Heart left ventricle (tissue), 16 donors: ENCODE measurements at regions of chr12 and their contacts with region 1.

Region 1: GRCh38 chr12:93183940-93184671 is 193.6 kb upstream of the NUDT4 start:
- DNase-seq: peak in 4 of 5 donors; percentile 50 to 71 (median 62)
- ATAC-seq: peak; percentile 82 to 91 (median 86)
- H3K4me3 ChIP-seq: no peak overlapping the region
- H3K27ac ChIP-seq: peak overlapping the region; percentile 78 to 95 (median 86)
- H3K4me1 ChIP-seq: peaks cover 3 to 39% (median 18%) of the 10 kb centered on the region in 12 donors
- H3K27me3 ChIP-seq: no peaks in the 10 kb centered on the region
- CTCF ChIP-seq: no peak
- POLR2A ChIP-seq: no peak

Region 2: DNA sequence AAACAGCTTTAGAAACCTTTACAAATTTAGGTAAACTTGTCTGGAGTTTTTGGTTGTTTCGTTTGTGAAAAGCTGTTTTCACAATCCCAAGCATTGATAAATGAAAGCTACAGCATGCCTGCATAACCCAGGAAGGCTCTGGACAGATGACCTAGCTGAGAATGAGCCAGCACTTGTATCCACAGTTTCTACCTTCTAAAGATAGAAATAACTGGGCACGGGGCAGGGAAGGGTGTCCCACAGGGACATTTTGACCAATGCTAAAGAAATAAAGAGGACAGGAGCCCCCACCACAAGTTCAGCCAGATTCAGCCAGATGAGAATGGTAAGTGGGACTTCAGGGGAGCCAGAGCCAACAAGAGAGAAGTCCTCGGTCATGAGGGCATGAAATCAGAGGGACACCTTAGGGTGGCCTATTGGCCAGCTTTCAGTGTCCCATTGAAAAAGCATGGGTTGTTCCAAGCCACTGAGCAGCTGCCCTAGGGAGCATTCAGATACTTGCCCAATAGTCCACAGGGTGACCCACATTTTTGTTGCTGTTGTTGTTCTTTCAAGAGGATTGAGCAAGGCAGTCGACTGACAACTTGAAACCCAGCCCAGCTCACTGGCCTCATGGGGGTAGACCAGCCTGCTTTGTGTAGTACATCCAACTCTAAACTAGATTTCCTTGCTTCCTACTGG is 53.3 kb after region 1 on chr12:
- intact Hi-C with region 1: loop called in 1 of 10 experiments (anchors 5 kb)
- DNase-seq: peak in 1 of 5 donors; percentile 42
- ATAC-seq: peak; percentile 44 to 75 (median 70)
- H3K4me3 ChIP-seq: no peak overlapping the region
- H3K27ac ChIP-seq: peak overlapping the region in 4 of 12 donors; percentile 31 to 55 (median 44)
- H3K4me1 ChIP-seq: peaks cover 0 to 12% (median 2%) of the 10 kb centered on the region in 12 donors
- H3K27me3 ChIP-seq: no peaks in the 10 kb centered on the region
- CTCF ChIP-seq: no peak
- POLR2A ChIP-seq: no peak

Region 3: DNA sequence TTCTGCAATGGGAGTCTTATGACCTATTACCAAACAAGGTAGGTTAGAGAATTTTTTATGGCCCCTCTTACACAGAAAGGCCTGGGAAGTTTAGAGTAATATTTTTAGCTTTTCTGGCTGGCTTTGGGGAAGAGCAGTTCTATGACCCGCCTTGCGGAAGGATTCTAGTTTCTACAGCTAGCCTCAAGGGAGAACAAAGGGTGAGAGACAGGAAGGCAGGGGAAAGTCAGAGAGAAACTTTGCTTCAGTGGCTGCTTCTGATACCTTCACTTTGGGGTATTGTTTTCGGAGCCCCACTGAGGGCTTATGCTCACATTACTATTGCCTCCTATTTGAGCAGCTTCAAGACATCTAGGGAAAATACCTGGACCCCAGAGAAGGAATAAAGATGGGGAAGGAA is 112.9 kb after region 1 on chr12:
- intact Hi-C with region 1: loop called in 3 of 10 experiments (anchors 5 to 10 kb)
- DNase-seq: no peak
- ATAC-seq: peak in 1 of 4 donors; percentile 29
- H3K4me3 ChIP-seq: no peak overlapping the region
- H3K27ac ChIP-seq: peak overlapping the region in 9 of 12 donors; percentile 8 to 82 (median 43)
- H3K4me1 ChIP-seq: peaks cover 0 to 40% (median 13%) of the 10 kb centered on the region in 12 donors
- H3K27me3 ChIP-seq: no peaks in the 10 kb centered on the region
- CTCF ChIP-seq: no peak
- POLR2A ChIP-seq: no peak

Region 4: GRCh38 chr12:93302331-93303229 is 118.5 kb after region 1 on chr12:
- intact Hi-C with region 1: loop called in 3 of 10 experiments (anchors 5 to 10 kb)
- DNase-seq: peak in 3 of 5 donors; percentile 35 to 49 (median 44)
- ATAC-seq: peak; percentile 77 to 82 (median 81)
- H3K4me3 ChIP-seq: no peak overlapping the region
- H3K27ac ChIP-seq: peak overlapping the region in 11 of 12 donors; percentile 2 to 81 (median 61)
- H3K4me1 ChIP-seq: peaks cover 0 to 46% (median 19%) of the 10 kb centered on the region in 12 donors
- H3K27me3 ChIP-seq: no peaks in the 10 kb centered on the region
- CTCF ChIP-seq: no peak
- POLR2A ChIP-seq: no peak

Region 5: DNA sequence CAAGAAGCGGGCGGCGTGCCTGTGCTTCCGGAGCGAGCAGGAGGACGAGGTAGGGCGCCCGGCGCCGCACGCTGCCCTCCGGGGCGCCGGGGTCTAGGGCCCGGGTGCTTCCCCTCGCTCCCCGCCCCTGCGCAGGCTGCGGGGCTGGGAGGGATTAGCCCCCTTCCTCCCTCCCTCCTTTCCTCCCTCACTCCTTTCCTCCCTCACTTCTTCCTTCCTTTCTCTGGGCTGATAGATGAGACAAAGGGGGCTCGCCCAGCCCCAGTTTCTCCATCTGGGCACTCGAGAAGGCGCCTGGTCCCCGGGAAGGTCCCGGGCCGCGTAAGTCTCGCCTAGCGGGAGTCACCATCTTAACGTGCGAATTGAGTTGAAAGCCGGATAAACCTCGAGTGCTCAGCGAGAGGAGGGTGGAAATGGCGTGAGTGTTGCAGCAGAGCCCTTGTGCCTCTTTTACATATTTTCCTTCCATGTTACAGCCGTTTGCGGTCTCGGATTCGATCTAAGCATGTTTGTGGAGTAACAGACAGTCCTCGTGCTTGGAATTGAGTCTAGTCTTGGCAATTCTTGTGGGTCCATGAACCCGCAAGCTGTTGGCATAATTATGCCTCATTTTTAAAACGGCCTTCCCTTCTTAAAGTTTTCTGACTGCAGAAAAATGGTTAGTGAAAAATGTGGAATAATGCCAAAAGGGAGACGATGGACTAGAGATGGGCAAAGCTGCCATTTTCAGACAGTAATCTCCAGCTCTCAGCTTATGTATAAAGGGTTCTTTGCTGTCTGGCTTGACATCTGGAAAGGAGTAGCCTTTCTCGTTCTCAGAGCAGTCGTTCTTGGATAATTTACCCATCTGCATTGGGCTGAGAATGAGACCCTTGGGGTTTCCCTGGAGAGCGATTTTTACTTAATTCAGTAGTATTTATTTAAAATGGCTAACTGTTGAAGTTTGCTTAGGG is 194.5 kb after region 1 on chr12:
- intact Hi-C with region 1: loop called in 6 of 10 experiments (anchors 5 kb)
- DNase-seq: peak in 4 of 5 donors; percentile 38 to 50 (median 46)
- ATAC-seq: peak in 1 of 4 donors; percentile 14
- H3K4me3 ChIP-seq: peak overlapping the region; percentile 57 to 97 (median 86)
- H3K27ac ChIP-seq: peak overlapping the region; percentile 78 to 97 (median 96)
- H3K4me1 ChIP-seq: peaks cover 0 to 68% (median 30%) of the 10 kb centered on the region in 12 donors
- H3K27me3 ChIP-seq: no peaks in the 10 kb centered on the region
- CTCF ChIP-seq: no peak
- POLR2A ChIP-seq: peak in 1 of 2 donors; percentile 17

Region 6: DNA sequence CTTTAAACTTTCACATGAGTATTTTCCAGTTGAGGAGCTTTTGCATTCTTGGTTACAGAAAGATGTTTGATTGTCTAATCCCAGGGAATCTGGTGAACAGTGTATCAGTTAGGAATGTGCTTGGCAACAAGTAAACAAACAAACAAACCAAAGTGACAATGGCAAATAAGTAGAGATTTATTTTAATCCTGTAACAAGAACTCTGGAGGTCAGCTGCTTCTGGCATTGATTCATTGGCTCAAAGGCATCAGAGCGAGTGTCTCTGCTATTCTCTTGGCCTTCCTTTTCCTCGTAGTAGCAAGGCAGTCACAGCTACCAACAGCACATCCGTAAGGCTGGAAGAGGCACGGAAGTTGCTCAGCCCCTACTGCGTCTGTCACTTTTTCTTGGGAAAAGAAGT is 530.3 kb after region 1 on chr12:
- intact Hi-C with region 1: no loop called
- DNase-seq: peak in 3 of 5 donors; percentile 26 to 36 (median 31)
- ATAC-seq: peak in 3 of 4 donors; percentile 66 to 75 (median 68)
- H3K4me3 ChIP-seq: peak overlapping the region in 1 of 12 donors; percentile 0
- H3K27ac ChIP-seq: peak overlapping the region; percentile 51 to 83 (median 68)
- H3K4me1 ChIP-seq: peaks cover 0 to 39% (median 12%) of the 10 kb centered on the region in 12 donors
- H3K27me3 ChIP-seq: no peaks in the 10 kb centered on the region
- CTCF ChIP-seq: no peak
- POLR2A ChIP-seq: no peak